GM10248 (cell line): ENCODE measurements at regions of chr13 and their contacts with region 1.

Region 1: GRCh38 chr13:51814825-51815650 is 11.1 kb upstream of the DHRS12 start:
- DNase-seq: peak; percentile 81
- CTCF ChIP-seq: peak; percentile 80

Region 2: DNA sequence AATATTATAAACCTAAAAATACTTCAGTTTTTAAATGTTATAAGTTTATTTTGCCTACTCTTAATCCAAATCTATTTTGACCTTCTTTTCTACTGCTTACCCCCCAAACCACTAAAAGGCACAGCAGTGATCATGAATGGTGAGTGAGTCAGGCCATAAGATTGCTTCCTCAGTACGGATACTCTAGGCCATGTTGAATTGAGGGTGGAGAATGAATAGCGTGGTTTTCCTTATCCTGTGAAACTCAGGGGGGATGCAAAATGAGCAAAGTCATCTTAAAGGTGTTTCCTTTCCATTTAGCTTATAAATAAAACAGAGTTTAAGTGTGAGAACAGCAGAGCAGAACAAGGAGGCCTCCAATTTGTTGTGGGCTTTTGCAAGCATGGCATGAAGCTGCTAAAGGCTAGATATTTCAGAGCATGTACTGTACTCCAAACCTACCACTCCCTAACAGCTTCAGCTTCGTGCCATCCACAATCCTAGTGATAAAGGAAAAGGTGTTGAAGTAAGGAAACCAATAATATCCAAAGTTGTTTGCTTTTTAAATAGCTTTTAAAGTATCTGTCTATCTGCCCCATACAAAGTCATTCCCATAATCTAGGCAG is 450.5 kb before region 1 on chr13:
- CTCF ChIA-PET with region 1: no interaction called
- POLR2A ChIA-PET with region 1: no interaction called
- DNase-seq: no peak
- CTCF ChIP-seq: no peak

Region 3: GRCh38 chr13:51797664-51798488 is 17.2 kb before region 1 on chr13:
- CTCF ChIA-PET with region 1: interaction called, 21 read pairs
- POLR2A ChIA-PET with region 1: no interaction called
- DNase-seq: peak; percentile 61
- CTCF ChIP-seq: peak; percentile 67

Region 4: GRCh38 chr13:51825165-51825592 is 10.1 kb after region 1 on chr13:
- CTCF ChIA-PET with region 1: interaction called, 48 read pairs
- POLR2A ChIA-PET with region 1: interaction called, 5 read pairs
- DNase-seq: no peak
- CTCF ChIP-seq: no peak

Region 5: GRCh38 chr13:51838240-51838846 is 23.3 kb after region 1 on chr13:
- CTCF ChIA-PET with region 1: interaction called, 23 read pairs
- POLR2A ChIA-PET with region 1: no interaction called
- DNase-seq: no peak
- CTCF ChIP-seq: no peak

Region 6: GRCh38 chr13:52128714-52129700 is 314.0 kb after region 1 on chr13 and contains the start of gene NEK5:
- CTCF ChIA-PET with region 1: interaction called, 29 read pairs
- POLR2A ChIA-PET with region 1: no interaction called
- DNase-seq: peak; percentile 78
- CTCF ChIP-seq: peak; percentile 52